MCF 10A (cell line): ENCODE measurements at regions of chr6 and their contacts with region 1.

Region 1: GRCh38 chr6:47047479-47048407 is 5.6 kb upstream of the ADGRF1 start:
- DNase-seq: peak; percentile 79
- H3K4me3 Mint-ChIP-seq: no peak overlapping the region
- H3K27ac Mint-ChIP-seq: peak overlapping the region; percentile 5
- H3K4me1 Mint-ChIP-seq: peaks cover 31% of the 10 kb centered on the region
- H3K27me3 Mint-ChIP-seq: no peaks in the 10 kb centered on the region
- CTCF ChIP-seq: peak; percentile 74

Region 2: DNA sequence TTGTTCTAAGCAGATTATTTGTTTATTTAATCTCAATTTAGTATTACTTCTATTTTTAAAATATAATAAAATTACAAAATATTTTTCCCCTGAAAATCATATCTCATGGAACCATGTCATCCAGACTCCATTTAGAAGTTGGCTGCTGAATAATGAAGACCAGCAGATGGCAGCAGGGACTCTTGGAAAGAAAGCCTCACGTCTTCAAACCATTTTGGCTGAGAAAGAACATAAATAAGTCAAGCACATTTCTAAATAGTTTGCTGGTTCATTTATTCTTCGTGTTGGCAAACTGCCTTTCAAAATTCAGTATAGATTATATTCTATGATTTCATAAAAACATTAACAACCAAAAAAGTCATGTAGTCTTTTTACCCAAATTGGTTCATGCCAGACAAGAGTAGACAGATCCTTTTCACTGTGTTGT is 628.2 kb before region 1 on chr6:
- CTCF ChIA-PET with region 1: no interaction called
- POLR2A ChIA-PET with region 1: no interaction called
- intact Hi-C with region 1: loop called (anchors 1 kb)
- DNase-seq: peak; percentile 78
- H3K4me3 Mint-ChIP-seq: no peak overlapping the region
- H3K27ac Mint-ChIP-seq: no peak overlapping the region
- H3K4me1 Mint-ChIP-seq: peaks cover 7% of the 10 kb centered on the region
- H3K27me3 Mint-ChIP-seq: peaks cover 11% of the 10 kb centered on the region
- CTCF ChIP-seq: peak; percentile 73

Region 3: DNA sequence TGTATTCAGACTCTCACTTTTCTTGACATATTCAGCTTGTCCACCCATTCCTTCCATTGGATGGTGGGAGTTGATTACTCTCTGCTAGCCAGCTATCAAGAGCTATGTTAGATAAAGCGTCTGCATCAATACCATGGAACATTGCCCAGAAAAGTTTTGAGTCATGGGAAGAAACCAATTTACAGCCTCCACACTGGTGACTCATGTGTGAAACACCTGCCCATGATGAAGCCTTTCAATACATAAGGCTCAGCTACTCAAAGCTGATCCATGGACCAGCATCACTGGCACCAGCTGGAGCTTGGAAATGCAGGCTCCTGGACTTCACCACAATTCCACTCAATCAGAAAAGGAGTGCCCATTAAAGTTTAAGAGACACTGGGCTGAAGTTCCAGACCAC is 328.6 kb before region 1 on chr6:
- CTCF ChIA-PET with region 1: no interaction called
- POLR2A ChIA-PET with region 1: no interaction called
- intact Hi-C with region 1: loop called (anchors 5 kb)
- DNase-seq: peak; percentile 89
- H3K4me3 Mint-ChIP-seq: no peak overlapping the region
- H3K27ac Mint-ChIP-seq: no peak overlapping the region
- H3K4me1 Mint-ChIP-seq: peaks cover 14% of the 10 kb centered on the region
- H3K27me3 Mint-ChIP-seq: peaks cover 9% of the 10 kb centered on the region
- CTCF ChIP-seq: no peak

Region 4: GRCh38 chr6:46848684-46849360 is 198.9 kb before region 1 on chr6:
- CTCF ChIA-PET with region 1: interaction called, 38 read pairs
- POLR2A ChIA-PET with region 1: interaction called, 4 read pairs
- intact Hi-C with region 1: loop called (anchors 1 kb)
- DNase-seq: peak; percentile 78
- H3K4me3 Mint-ChIP-seq: no peak overlapping the region
- H3K27ac Mint-ChIP-seq: no peak overlapping the region
- H3K4me1 Mint-ChIP-seq: peaks cover 6% of the 10 kb centered on the region
- H3K27me3 Mint-ChIP-seq: no peaks in the 10 kb centered on the region
- CTCF ChIP-seq: peak; percentile 98

Region 5: GRCh38 chr6:46925563-46926253 is 122.0 kb before region 1 on chr6:
- CTCF ChIA-PET with region 1: no interaction called
- POLR2A ChIA-PET with region 1: no interaction called
- intact Hi-C with region 1: loop called (anchors 5 kb)
- DNase-seq: peak; percentile 85
- H3K4me3 Mint-ChIP-seq: no peak overlapping the region
- H3K27ac Mint-ChIP-seq: peak overlapping the region; percentile 85
- H3K4me1 Mint-ChIP-seq: peaks cover 36% of the 10 kb centered on the region
- H3K27me3 Mint-ChIP-seq: no peaks in the 10 kb centered on the region
- CTCF ChIP-seq: no peak

Region 6: DNA sequence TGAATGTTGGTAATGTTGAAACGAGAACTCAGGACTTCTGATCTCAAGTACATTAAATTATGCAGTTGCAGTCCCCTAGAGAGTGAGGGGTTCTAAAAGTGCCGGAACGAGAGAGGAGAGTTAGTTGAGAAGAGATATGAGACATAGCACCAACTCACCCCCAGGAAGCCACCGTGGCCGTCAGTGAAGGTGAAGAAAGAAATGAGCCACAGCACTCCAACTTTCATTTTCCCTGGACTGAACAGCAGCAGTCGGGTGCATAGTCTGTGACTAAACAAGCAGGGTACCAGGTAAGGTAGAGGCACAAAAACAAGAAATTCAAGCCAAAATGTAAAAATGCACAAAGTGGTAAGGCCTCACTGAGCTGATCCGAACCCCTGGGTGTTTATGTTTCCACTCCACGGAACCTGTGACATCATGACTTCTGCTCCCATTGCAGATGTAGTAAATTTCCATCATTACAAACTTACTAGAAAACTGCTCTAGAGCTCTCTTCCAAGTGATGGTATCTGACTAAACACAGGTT is 18.8 kb before region 1 on chr6:
- CTCF ChIA-PET with region 1: interaction called, 19 read pairs
- POLR2A ChIA-PET with region 1: interaction called, 26 read pairs
- intact Hi-C with region 1: no loop called
- DNase-seq: no peak
- H3K4me3 Mint-ChIP-seq: no peak overlapping the region
- H3K27ac Mint-ChIP-seq: no peak overlapping the region
- H3K4me1 Mint-ChIP-seq: peaks cover 8% of the 10 kb centered on the region
- H3K27me3 Mint-ChIP-seq: no peaks in the 10 kb centered on the region
- CTCF ChIP-seq: no peak

Region 7: GRCh38 chr6:47061309-47062300 is 13.9 kb after region 1 on chr6:
- CTCF ChIA-PET with region 1: interaction called, 17 read pairs
- POLR2A ChIA-PET with region 1: interaction called, 8 read pairs
- intact Hi-C with region 1: no loop called
- DNase-seq: peak; percentile 81
- H3K4me3 Mint-ChIP-seq: no peak overlapping the region
- H3K27ac Mint-ChIP-seq: peak overlapping the region; percentile 92
- H3K4me1 Mint-ChIP-seq: peaks cover 28% of the 10 kb centered on the region
- H3K27me3 Mint-ChIP-seq: no peaks in the 10 kb centered on the region
- CTCF ChIP-seq: no peak